ENCODE measurements at regions of chr18 and their contacts with region 1.

Region 1: GRCh38 chr18:23356915-23357601 is 96.0 kb upstream of the RIOK3 start:
- DNase-seq: no peak
- H3K4me3 ChIP-seq: no peak overlapping the region
- H3K27ac ChIP-seq: peak overlapping the region; percentile 21 to 67 (median 48)
- H3K4me1 ChIP-seq: peaks cover 0 to 30% (median 16%) of the 10 kb centered on the region in 4 donors
- H3K27me3 ChIP-seq: no peaks in the 10 kb centered on the region
- CTCF ChIP-seq: no peak
- EP300 ChIP-seq: no peak
- POLR2A ChIP-seq: no peak

Region 2: GRCh38 chr18:23131693-23132319 is 225.3 kb before region 1 on chr18:
- in situ Hi-C with region 1: loop called in 3 of 4 experiments (anchors 10 to 25 kb)
- intact Hi-C with region 1: no loop called
- DNase-seq: peak; percentile 64
- H3K4me3 ChIP-seq: no peak overlapping the region
- H3K27ac ChIP-seq: no peak overlapping the region
- H3K4me1 ChIP-seq: peaks cover 4 to 27% (median 19%) of the 10 kb centered on the region in 4 donors
- H3K27me3 ChIP-seq: peaks cover 21% of the 10 kb centered on the region
- CTCF ChIP-seq: peak; percentile 78 to 83 (median 82)
- EP300 ChIP-seq: no peak
- POLR2A ChIP-seq: no peak

Measured in transverse colon (tissue), 4 donors.